ENCODE measurements at regions of chr11 and their contacts with region 1.

Region 1: DNA sequence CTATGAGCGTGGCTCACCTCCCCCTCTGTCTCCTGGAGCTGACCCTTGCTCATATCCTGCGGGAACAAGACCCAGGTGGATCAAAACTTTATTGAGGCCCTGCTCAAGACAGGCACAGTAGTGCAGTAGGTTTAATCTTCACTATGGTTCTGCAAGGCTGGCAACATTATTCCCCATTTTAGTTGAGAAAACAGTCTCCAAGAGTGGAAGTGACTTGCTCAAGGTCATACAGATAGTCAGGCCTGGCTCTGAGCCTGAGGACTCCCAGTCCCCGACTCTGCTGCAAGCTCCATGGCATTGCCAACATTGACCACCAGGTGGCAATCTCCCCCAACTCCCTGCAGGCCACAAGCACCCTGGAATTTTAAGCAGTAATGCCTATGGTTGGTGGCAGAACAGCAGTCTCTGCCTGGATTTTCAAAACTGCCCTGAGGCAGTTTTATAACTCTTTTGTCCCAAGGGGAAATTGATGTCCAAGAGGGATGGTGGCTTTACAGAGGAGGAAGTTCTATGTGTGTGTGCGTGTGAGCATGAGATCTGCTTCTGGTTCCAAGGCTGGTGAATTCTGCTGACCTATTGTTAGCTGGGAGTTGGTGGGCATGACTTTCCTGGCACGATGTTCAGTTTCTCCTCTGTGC is 34.1 kb downstream of the NEU3 start:
- DNase-seq: peak; percentile 83 to 95
- H3K4me3 ChIP-seq: no peak overlapping the region
- H3K27ac ChIP-seq: no peak overlapping the region
- H3K4me1 ChIP-seq: no peaks in the 10 kb centered on the region; a peak in 2 of 7 replicates
- H3K27me3 ChIP-seq: no peaks in the 10 kb centered on the region
- CTCF ChIP-seq: peak; percentile 93 to 98 (median 98)
- EP300 ChIP-seq: no peak
- POLR2A ChIP-seq: no peak
- RAD21 ChIP-seq: peak; percentile 93 to 97

Region 2: DNA sequence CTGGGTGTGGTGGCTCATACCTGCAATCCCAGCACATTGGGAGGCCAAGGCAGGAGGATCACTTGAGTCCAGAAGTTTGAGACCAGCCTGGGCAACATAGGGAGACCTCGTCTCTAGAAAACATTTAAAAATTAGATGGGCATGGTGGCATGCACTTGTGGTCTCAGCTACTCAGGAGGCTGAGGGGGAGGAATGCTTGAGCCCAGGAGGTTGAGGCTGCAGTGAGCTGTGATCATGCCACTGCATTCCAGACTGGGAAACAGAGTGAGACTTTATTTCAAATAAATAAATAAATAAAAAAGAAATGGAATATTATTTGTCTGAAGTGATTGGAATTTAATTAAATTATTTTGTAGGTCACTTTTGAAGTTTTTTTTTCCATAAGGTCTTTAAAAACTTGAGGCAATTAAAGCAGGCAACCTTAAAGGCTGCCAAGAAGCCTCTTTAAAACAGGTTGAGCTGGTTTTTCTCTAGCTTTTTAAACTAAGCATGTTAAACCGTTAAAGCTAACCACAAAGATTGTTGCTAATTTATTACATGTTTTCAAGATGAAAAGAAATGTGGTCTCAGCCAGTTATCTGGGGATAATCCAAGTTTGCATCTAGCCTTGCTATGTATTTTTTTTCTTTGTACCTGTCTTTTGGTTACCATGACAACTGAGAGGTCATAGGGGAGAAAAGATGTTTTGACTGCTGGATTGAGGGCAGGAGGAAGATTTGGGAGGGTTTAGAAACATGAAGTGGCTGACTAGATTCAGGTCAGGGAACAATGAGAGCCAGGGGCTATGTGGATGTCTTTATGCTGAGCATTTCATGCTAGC is 605.7 kb before region 1 on chr11:
- CTCF ChIA-PET with region 1: no interaction called
- POLR2A ChIA-PET with region 1: no interaction called
- DNase-seq: no peak
- H3K4me3 ChIP-seq: no peak overlapping the region
- H3K27ac ChIP-seq: no peak overlapping the region
- H3K4me1 ChIP-seq: peaks cover 0 to 4% (median 0%) of the 10 kb centered on the region in 4 experiments; a peak in 2 of 7 replicates
- H3K27me3 ChIP-seq: peaks cover 0 to 1% (median 0%) of the 10 kb centered on the region in 4 experiments; a peak in 1 of 7 replicates
- CTCF ChIP-seq: no peak
- EP300 ChIP-seq: no peak
- POLR2A ChIP-seq: no peak
- RAD21 ChIP-seq: no peak

Region 3: GRCh38 chr11:75073459-75074190 is 50.7 kb after region 1 on chr11:
- CTCF ChIA-PET with region 1: interaction called, 13 read pairs
- POLR2A ChIA-PET with region 1: no interaction called
- DNase-seq: no peak
- H3K4me3 ChIP-seq: no peak overlapping the region
- H3K27ac ChIP-seq: no peak overlapping the region
- H3K4me1 ChIP-seq: peaks cover 0 to 2% (median 0%) of the 10 kb centered on the region in 4 experiments; a peak in 1 of 7 replicates
- H3K27me3 ChIP-seq: no peaks in the 10 kb centered on the region
- CTCF ChIP-seq: peak in 2 of 3 experiments; percentile 23 to 47; a peak in 3 of 4 replicates
- EP300 ChIP-seq: no peak
- POLR2A ChIP-seq: no peak
- RAD21 ChIP-seq: peak in 1 of 2 experiments; percentile 26; a peak in 1 of 4 replicates

Region 4: GRCh38 chr11:75087319-75088305 is 64.7 kb after region 1 on chr11:
- CTCF ChIA-PET with region 1: no interaction called
- POLR2A ChIA-PET with region 1: no interaction called
- DNase-seq: no peak
- H3K4me3 ChIP-seq: no peak overlapping the region
- H3K27ac ChIP-seq: no peak overlapping the region
- H3K4me1 ChIP-seq: no peaks in the 10 kb centered on the region
- H3K27me3 ChIP-seq: no peaks in the 10 kb centered on the region
- CTCF ChIP-seq: peak in 2 of 3 experiments; percentile 10 to 42; a peak in 3 of 4 replicates
- EP300 ChIP-seq: no peak
- POLR2A ChIP-seq: no peak
- RAD21 ChIP-seq: no peak

Region 5: GRCh38 chr11:75195121-75195551 is 172.3 kb after region 1 on chr11:
- CTCF ChIA-PET with region 1: interaction called, 19 read pairs
- POLR2A ChIA-PET with region 1: no interaction called
- DNase-seq: no peak
- H3K4me3 ChIP-seq: no peak overlapping the region
- H3K27ac ChIP-seq: no peak overlapping the region
- H3K4me1 ChIP-seq: peaks cover 0 to 6% (median 2%) of the 10 kb centered on the region in 4 experiments; a peak in 2 of 7 replicates
- H3K27me3 ChIP-seq: no peaks in the 10 kb centered on the region
- CTCF ChIP-seq: no peak
- EP300 ChIP-seq: no peak
- POLR2A ChIP-seq: no peak
- RAD21 ChIP-seq: no peak

Region 6: GRCh38 chr11:75241036-75241905 is 218.4 kb after region 1 on chr11:
- CTCF ChIA-PET with region 1: interaction called, 27 read pairs
- POLR2A ChIA-PET with region 1: no interaction called
- DNase-seq: peak; percentile 63 to 97
- H3K4me3 ChIP-seq: peak overlapping the region; percentile 37 to 63 (median 44)
- H3K27ac ChIP-seq: no peak overlapping the region
- H3K4me1 ChIP-seq: peaks cover 5 to 19% (median 10%) of the 10 kb centered on the region in 4 experiments
- H3K27me3 ChIP-seq: peaks cover 24 to 50% (median 40%) of the 10 kb centered on the region in 4 experiments
- CTCF ChIP-seq: peak; percentile 94 to 99 (median 98)
- EP300 ChIP-seq: 0 out of 3 replicates have a peak, but pooled peaks of 1 of the 2 experiments have one; percentile 70
- POLR2A ChIP-seq: peak in 1 of 2 experiments; percentile 55; a peak in 1 of 3 replicates
- RAD21 ChIP-seq: peak; percentile 23 to 75; a peak in 3 of 4 replicates